ENCODE measurements at regions of chr1 and their contacts with region 1.

Region 1: DNA sequence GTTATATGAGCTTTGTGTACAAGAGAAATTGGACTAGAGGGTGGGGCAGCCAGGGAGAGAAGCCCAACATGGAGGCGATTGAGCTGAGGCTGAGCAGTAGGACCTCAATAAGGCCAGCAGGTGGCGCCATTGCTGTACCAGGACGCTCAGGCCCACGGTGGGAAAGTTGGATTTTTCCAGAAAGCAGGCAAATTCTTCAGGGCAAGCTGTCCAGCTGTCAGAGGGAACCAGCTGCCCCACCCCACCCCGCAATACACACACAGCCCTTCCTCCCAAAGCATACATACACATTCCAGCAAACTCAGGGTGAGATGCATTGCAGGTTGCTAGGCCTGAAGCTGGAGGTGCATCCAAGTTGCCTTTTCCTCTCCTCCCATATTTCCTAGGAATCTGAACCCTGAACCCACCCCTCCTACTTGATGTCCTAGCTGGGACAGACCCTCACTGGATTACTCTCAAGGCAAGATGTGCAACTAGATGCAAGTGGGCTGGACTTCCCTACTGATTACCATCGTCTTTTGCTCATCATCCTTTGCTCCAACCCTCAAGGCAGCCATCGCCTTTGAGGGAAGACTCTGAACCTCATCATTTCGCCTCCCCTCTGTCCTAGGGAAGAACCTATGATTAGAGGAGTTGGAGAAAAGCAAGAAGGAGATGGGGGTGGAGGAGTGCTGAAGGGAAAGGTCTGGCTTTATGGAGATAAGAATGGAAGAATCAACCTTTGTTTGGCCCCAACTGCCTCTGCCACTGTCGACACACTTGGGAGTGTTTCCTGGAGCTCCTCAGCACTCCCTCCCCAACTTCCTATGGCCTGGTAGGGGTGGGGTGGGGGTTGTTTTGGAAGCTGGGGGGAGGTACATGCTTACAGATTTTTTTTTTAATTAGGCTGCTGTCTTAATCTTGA is 25.5 kb downstream of the CD34 start:
- DNase-seq: peak; percentile 53
- H3K4me3 Mint-ChIP-seq: no peak overlapping the region
- H3K27ac Mint-ChIP-seq: peak overlapping the region; percentile 94
- H3K4me1 Mint-ChIP-seq: peaks cover 41% of the 10 kb centered on the region
- H3K27me3 Mint-ChIP-seq: peaks cover 4% of the 10 kb centered on the region

Region 2: DNA sequence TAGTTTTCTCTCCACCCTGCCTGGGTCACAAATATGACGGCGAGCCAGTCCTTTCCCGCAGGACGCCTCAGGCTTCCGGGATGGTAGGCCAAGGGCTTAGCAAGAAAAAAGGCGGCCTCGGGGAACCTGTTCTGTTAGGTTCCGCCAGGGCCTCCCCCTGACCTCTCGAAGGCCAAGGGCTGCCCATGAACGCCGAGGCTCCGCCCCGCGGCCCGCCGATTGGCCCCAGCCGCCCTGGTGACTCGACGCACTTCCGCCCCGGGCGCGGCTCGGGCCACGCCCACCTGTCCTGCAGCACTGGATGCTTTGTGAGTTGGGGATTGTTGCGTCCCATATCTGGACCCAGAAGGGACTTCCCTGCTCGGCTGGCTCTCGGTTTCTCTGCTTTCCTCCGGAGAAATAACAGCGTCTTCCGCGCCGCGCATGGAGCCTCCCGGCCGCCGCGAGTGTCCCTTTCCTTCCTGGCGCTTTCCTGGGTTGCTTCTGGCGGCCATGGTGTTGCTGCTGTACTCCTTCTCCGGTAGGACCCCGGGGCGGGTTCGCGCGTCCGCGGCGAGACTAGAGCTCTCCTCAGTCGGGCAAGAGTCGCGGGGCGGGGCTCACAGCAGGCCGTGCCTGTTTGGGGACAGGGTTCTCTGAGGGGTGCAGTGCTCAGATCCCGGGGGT is 133.5 kb before region 1 on chr1 and contains the start of gene CD46:
- intact Hi-C with region 1: loop called (anchors 5 kb)
- DNase-seq: peak; percentile 92
- H3K4me3 Mint-ChIP-seq: peak within 1 kb of the TSS; percentile 95
- H3K27ac Mint-ChIP-seq: peak within 1 kb of the TSS; percentile 96
- H3K4me1 Mint-ChIP-seq: peaks cover 60% of the 10 kb centered on the region
- H3K27me3 Mint-ChIP-seq: no peaks in the 10 kb centered on the region
- total RNA-seq, gene CD46: 113 and 116 TPM in 2 replicates

Region 3: GRCh38 chr1:207828485-207829158 is 56.8 kb before region 1 on chr1:
- intact Hi-C with region 1: loop called (anchors 1 kb)
- DNase-seq: peak; percentile 46
- H3K4me3 Mint-ChIP-seq: no peak overlapping the region
- H3K27ac Mint-ChIP-seq: peak overlapping the region; percentile 65
- H3K4me1 Mint-ChIP-seq: peaks cover 84% of the 10 kb centered on the region
- H3K27me3 Mint-ChIP-seq: no peaks in the 10 kb centered on the region

Region 4: DNA sequence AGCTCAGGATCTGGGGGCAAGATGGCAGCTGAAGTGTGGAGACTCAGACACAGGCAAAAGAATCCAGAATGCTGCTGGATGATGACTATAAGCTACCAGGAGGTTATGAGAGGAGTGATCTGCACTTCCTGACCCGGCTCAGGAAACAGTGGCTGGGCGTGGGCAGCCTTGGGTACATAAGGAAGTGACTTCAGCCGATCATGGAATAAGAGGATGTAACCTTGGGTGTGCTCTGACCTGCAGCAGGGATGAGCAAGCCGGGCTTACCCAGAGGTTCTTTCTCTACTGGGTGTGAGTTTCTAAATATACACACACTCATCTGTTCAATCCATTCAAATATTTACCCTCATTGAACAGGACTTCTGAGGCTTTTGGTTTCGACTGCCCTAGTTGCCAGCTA is 37.1 kb before region 1 on chr1:
- intact Hi-C with region 1: loop called (anchors 2 kb)
- DNase-seq: no peak
- H3K4me3 Mint-ChIP-seq: peak overlapping the region; percentile 5
- H3K27ac Mint-ChIP-seq: peak overlapping the region; percentile 65
- H3K4me1 Mint-ChIP-seq: peaks cover 50% of the 10 kb centered on the region
- H3K27me3 Mint-ChIP-seq: no peaks in the 10 kb centered on the region

Region 5: DNA sequence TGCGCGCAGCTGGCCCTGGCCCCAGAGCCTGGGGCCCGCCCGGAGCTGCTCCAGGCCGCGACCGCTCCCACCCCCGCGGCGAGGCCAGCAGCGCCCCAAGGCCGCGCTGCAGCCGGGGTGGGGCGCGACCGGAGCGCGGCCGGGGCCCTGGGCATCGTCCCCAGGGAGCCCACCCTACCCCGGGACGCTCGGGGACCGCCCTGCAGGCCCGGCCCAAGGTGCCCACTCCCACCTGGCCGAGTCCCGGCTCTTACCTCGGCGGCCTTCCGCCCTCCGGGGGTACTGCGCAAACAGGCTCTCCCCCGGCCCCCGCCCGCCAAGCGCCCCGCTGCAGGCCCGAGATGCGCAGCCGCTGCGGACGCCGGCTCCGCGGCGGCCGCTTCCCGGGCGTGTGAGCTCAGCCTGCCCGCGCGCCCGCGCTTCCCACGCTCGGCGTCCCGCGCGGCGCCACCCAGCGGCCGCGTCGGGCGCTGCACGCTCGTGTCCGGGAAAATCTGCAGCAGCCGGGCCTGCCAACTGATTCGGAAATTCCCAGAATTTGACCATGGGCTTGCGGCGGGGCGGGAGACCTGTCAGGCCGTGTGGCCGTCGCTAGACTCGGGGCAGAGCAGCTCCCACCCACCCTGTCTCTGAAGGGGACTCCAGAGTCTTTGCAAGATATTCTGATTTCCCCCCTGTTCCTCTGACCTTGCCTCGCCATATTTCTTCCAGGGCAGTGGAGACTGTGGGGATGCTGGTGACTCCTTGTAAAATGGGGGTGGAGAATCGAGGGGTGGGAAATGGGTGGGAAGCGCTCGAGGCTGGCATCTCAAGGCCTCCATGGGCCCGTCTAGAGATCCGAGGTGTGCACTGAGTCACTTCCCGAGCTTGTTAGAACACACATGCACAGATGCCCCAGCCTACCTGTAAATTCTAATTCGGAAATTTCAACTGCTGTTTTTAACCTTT is 16.3 kb before region 1 on chr1:
- intact Hi-C with region 1: loop called (anchors 1 kb)
- DNase-seq: peak; percentile 63
- H3K4me3 Mint-ChIP-seq: peak overlapping the region; percentile 89
- H3K27ac Mint-ChIP-seq: peak overlapping the region; percentile 87
- H3K4me1 Mint-ChIP-seq: peaks cover 79% of the 10 kb centered on the region
- H3K27me3 Mint-ChIP-seq: no peaks in the 10 kb centered on the region

Region 6: GRCh38 chr1:207910591-207911354 is 25.4 kb after region 1 on chr1 and contains the start of gene CD34:
- intact Hi-C with region 1: no loop called
- DNase-seq: no peak
- H3K4me3 Mint-ChIP-seq: peak within 1 kb of the TSS; percentile 56
- H3K27ac Mint-ChIP-seq: no peak within 1 kb of the TSS
- H3K4me1 Mint-ChIP-seq: peaks cover 13% of the 10 kb centered on the region
- H3K27me3 Mint-ChIP-seq: peaks cover 72% of the 10 kb centered on the region
- total RNA-seq, gene CD34: not detected in 2 replicates

Region 7: DNA sequence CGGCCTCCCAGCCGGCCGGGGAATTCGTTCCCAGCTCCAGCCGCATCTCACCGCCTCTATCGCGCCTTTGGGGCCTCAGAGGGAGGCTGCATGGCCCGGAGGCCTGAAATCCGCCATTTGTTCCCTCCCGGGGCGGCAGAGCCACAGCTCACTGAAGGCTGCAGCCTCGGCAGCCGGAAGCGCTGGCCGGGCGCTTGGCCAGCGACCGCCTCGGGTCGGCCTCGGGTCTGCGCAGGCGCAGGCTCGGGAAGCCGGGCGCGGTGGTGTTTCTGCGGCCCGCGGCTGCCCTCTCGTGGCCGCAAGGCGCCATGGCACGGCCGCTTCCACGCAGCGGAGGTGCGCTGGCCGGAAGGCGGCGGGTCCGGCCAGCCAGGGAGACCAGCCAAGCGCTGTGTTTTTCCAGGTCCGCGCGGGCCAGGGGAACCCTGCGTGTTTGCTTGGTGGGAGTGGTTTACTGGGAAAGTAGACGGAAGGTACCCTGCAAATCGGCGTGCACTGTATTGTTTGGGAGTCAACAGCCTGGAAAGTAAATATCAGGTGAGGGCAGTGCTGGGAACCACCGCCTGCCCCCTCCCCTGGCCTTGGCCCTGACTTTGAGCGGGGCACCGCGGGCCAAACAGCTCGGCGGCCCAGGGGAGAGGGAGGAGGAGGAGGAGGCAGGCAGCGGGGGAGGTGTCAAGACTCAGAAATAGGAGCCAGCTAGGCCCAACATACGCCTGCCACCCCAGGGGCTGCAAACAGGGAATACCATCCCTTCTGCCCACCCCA is 78.2 kb after region 1 on chr1:
- intact Hi-C with region 1: loop called (anchors 1 kb)
- DNase-seq: peak; percentile 80
- H3K4me3 Mint-ChIP-seq: peak overlapping the region; percentile 76
- H3K27ac Mint-ChIP-seq: no peak overlapping the region
- H3K4me1 Mint-ChIP-seq: peaks cover 11% of the 10 kb centered on the region
- H3K27me3 Mint-ChIP-seq: peaks cover 44% of the 10 kb centered on the region